Activated CD4-positive, alpha-beta memory T cell treated with anti-CD3 and anti-CD28 coated beads, Interleukin-2, amount 10 ng/mL, durations not matched to agents 7 days and 5 days (primary cell): ENCODE measurements at regions of chr10 and their contacts with region 1.

Region 1: GRCh38 chr10:33115738-33116719 is 158.0 kb upstream of the ITGB1 start:
- DNase-seq: peak; percentile 56
- H3K4me3 Mint-ChIP-seq: peak overlapping the region; percentile 69
- H3K27ac Mint-ChIP-seq: peak overlapping the region; percentile 96
- H3K4me1 Mint-ChIP-seq: peaks cover 95% of the 10 kb centered on the region
- H3K27me3 Mint-ChIP-seq: no peaks in the 10 kb centered on the region

Region 2: DNA sequence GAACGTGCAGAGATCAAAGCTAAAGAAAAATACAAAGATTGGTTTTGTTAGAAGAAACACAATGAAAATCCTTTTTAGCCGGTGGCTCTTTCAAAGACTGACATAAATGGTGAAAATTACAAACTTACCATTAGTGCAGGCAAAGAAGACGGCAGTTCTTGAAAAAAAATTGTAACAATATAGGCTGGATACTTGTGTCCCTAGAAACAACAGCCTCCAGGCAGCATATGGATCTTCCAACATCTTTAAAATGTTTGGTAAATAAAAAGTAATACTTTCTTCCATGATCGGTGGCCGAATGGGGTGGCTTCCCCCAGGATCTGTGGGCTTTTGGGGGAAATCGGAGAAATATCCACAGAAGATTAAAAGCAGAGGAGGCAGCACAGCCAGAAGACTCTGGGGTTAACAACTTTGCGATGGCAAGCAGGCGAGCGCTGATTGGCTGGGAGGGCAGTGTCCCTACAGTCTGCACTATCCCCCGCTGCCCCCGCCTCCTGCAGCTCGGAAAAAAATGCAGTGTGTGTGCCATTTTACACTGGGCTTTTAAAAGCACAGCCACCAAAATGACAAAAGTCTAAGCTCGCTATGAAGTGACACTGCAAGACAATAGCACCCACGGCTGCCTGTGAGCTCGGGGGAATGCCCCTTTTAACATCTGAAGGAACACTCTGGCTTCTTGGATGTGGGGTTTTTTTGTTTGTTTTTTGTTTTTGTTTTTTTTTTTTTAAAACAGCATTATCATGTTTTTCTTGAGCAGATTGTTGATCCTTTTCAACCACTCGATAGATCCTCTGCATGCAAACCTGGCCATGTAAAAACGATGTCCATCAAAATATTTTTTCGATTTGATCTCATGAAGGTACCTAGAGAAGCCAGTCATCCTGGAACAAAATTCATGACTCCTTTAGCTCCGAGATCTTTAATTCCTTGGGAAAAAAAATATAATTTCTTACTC is 737.4 kb before region 1 on chr10:
- CTCF ChIA-PET with region 1: no interaction called
- POLR2A ChIA-PET with region 1: interaction called, 13 read pairs
- DNase-seq: peak; percentile 95
- H3K4me3 Mint-ChIP-seq: no peak overlapping the region
- H3K27ac Mint-ChIP-seq: no peak overlapping the region
- H3K4me1 Mint-ChIP-seq: peaks cover 25% of the 10 kb centered on the region
- H3K27me3 Mint-ChIP-seq: no peaks in the 10 kb centered on the region

Region 3: GRCh38 chr10:32980558-32981468 is 135.2 kb before region 1 on chr10:
- CTCF ChIA-PET with region 1: interaction called, 4 read pairs
- POLR2A ChIA-PET with region 1: interaction called, 28 read pairs
- DNase-seq: peak; percentile 89
- H3K4me3 Mint-ChIP-seq: peak overlapping the region; percentile 88
- H3K27ac Mint-ChIP-seq: peak overlapping the region; percentile 93
- H3K4me1 Mint-ChIP-seq: peaks cover 42% of the 10 kb centered on the region
- H3K27me3 Mint-ChIP-seq: no peaks in the 10 kb centered on the region

Region 4: DNA sequence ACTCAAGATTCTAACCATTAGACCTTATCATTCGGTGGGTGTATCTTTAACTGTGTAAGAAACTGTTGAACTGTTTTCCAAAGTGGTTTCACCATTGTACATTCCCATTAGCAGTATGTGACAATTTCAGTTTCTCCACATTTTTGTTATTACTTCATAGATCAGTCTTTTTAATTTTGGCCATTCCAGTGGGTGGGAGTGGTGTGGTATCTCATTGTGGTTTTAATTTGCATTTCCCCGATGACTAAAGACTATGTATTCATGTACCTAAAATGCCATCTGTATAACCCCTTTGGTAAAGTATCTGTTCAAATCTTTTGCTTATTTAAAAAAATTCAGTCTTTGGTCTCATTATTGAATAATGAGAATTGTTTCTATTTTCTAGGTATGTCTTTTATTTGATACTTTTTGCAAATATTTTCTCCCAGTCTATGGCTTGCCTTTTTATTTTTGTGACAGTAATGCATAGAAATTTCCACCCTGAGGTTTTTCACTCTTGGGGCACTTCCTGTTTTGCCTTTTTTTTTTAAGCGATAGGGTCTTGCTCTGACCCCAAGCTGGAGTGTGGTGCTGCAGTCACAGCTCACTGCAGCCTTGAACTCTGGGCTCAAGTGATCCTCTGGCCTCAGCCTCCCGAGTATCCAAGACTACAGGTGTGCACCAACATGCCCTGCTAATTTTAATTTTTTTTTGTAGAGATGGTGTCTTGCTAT is 16.9 kb before region 1 on chr10:
- CTCF ChIA-PET with region 1: interaction called, 37 read pairs
- POLR2A ChIA-PET with region 1: interaction called, 199 read pairs
- DNase-seq: no peak
- H3K4me3 Mint-ChIP-seq: peak overlapping the region; percentile 11
- H3K27ac Mint-ChIP-seq: peak overlapping the region; percentile 89
- H3K4me1 Mint-ChIP-seq: peaks cover 66% of the 10 kb centered on the region
- H3K27me3 Mint-ChIP-seq: no peaks in the 10 kb centered on the region

Region 5: DNA sequence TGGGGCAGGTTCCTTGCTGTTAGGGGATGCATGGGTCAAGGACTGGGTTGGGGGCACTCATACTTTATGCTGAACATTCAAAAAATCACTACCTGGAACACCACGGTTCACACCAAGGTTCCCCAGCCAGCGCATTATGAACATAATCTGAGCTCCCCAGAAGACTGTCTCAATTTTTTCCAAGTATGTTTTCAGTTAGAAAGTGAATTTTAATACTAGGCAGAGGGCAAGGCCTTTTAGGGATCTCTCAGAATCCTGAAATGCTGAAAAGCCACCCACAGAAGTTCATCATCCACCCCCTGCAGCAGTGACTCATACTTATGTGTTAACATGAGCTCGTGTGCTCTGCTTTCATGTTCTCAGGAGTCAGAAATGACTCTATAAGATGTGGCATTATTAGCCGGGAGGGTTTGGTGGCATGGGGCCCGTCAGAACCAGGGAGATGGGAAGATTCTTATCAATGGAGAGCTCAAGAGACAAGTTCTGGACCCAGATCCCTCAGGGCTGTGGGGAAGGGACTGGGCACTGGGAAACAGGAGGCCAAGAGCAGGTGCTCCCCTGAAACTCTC is 27.2 kb after region 1 on chr10:
- CTCF ChIA-PET with region 1: interaction called, 3 read pairs
- POLR2A ChIA-PET with region 1: interaction called, 408 read pairs
- DNase-seq: peak; percentile 52
- H3K4me3 Mint-ChIP-seq: no peak overlapping the region
- H3K27ac Mint-ChIP-seq: peak overlapping the region; percentile 72
- H3K4me1 Mint-ChIP-seq: peaks cover 55% of the 10 kb centered on the region
- H3K27me3 Mint-ChIP-seq: no peaks in the 10 kb centered on the region